ENCODE measurements at regions of chr3 and their contacts with region 1.

Region 1: DNA sequence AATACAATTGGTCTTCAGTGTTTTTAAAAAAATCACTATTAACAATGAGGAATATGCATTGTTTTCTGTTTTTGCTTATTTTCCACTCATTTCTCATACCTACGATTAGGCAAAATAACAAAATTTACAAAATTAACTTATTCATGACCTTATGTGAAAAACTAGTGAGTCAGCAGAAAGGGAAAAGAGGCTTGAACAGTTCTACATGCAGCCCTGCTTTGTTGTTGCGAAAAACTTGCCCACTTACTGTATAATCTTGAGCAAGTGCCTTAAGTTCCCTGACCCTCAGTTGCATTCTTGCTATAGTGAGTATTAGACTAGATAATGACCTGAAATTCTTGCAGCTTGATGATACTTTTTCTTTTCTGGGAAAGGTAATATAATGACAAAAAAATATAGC is 551.1 kb upstream of the BCHE start:
- DNase-seq: no peak
- ATAC-seq: no peak
- H3K4me3 ChIP-seq: no peak overlapping the region
- H3K4me3 Mint-ChIP-seq: no peak overlapping the region
- H3K27ac ChIP-seq: no peak overlapping the region
- H3K27ac Mint-ChIP-seq: no peak overlapping the region
- H3K4me1 ChIP-seq: no peaks in the 10 kb centered on the region
- H3K4me1 Mint-ChIP-seq: no peaks in the 10 kb centered on the region
- H3K27me3 ChIP-seq: no peaks in the 10 kb centered on the region
- H3K27me3 Mint-ChIP-seq: no peaks in the 10 kb centered on the region

Region 2: DNA sequence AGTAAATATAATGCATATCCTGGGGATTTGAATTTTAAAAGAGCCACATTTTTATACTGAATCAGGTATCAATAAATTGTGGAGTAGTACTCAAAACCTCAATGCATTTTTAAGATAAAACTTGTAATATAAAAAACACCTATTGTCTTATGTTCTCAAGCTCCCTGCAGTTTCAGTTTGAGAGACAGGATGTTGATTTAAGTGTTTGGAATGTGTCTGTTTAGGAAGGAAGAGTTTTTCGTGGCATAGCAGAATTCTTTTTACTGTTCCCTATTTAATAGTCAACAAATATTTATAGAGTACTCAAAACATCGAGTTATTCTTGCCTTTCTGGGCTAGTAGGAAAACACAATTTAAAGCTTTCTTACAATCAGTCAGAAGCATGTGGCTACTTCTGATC is 405.0 kb before region 1 on chr3:
- CTCF ChIA-PET with region 1: no interaction called
- POLR2A ChIA-PET with region 1: no interaction called
- intact Hi-C with region 1: no loop called
- DNase-seq: no peak
- ATAC-seq: no peak
- H3K4me3 ChIP-seq: no peak overlapping the region
- H3K4me3 Mint-ChIP-seq: no peak overlapping the region
- H3K27ac ChIP-seq: no peak overlapping the region
- H3K27ac Mint-ChIP-seq: no peak overlapping the region
- H3K4me1 ChIP-seq: no peaks in the 10 kb centered on the region
- H3K4me1 Mint-ChIP-seq: no peaks in the 10 kb centered on the region
- H3K27me3 ChIP-seq: no peaks in the 10 kb centered on the region
- H3K27me3 Mint-ChIP-seq: no peaks in the 10 kb centered on the region

Region 3: DNA sequence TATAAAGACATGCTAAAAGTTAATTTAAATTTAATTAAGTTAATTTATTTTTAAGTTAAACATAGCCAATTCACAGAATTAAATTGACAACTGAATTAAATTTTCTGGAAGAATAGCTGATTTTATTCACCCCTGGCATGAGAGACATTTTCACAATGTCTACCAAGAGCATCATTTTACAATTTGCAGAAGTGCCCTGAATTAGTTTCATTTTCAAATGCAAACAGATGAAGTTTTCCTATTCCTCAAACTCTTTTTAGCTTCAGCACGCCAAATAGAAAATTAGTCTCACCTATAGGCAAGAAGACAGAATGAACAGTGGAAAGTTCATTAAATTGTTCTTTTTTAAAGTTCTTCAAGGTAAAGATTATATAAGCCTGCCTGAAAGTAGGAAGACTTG is 732.5 kb after region 1 on chr3:
- CTCF ChIA-PET with region 1: no interaction called
- POLR2A ChIA-PET with region 1: no interaction called
- intact Hi-C with region 1: loop called in 1 of 2 experiments (anchors 5 kb)
- DNase-seq: no peak
- ATAC-seq: no peak
- H3K4me3 ChIP-seq: no peak overlapping the region
- H3K4me3 Mint-ChIP-seq: no peak overlapping the region
- H3K27ac ChIP-seq: no peak overlapping the region
- H3K27ac Mint-ChIP-seq: no peak overlapping the region
- H3K4me1 ChIP-seq: no peaks in the 10 kb centered on the region
- H3K4me1 Mint-ChIP-seq: no peaks in the 10 kb centered on the region
- H3K27me3 ChIP-seq: no peaks in the 10 kb centered on the region
- H3K27me3 Mint-ChIP-seq: no peaks in the 10 kb centered on the region

Measured in naive thymus-derived CD4-positive, alpha-beta T cell (primary cell).